GM12878 (cell line): ENCODE measurements at regions of chr17 and their contacts with region 1.

Region 1: GRCh38 chr17:46212634-46213435 is 19.6 kb upstream of the KANSL1 start:
- DNase-seq: no peak
- ATAC-seq: peak; percentile 89
- H3K4me3 ChIP-seq: no peak overlapping the region
- H3K27ac ChIP-seq: no peak overlapping the region
- H3K4me1 ChIP-seq: no peaks in the 10 kb centered on the region
- H3K27me3 ChIP-seq: no peaks in the 10 kb centered on the region
- CTCF ChIP-seq: peak; percentile 77 to 93 (median 89)
- EP300 ChIP-seq: no peak
- POLR2A ChIP-seq: no peak
- RAD21 ChIP-seq: peak; percentile 91

Region 2: GRCh38 chr17:46009681-46010596 is 202.9 kb before region 1 on chr17:
- CTCF ChIA-PET with region 1: interaction called, 65 read pairs
- POLR2A ChIA-PET with region 1: no interaction called
- RAD21 ChIA-PET with region 1: interaction called, 4 read pairs
- SMC1A ChIA-PET with region 1: interaction called, 26 read pairs
- in situ Hi-C with region 1: no loop called
- intact Hi-C with region 1: no loop called
- DNase-seq: no peak
- ATAC-seq: no peak
- H3K4me3 ChIP-seq: no peak overlapping the region
- H3K27ac ChIP-seq: no peak overlapping the region
- H3K4me1 ChIP-seq: no peaks in the 10 kb centered on the region
- H3K27me3 ChIP-seq: no peaks in the 10 kb centered on the region
- CTCF ChIP-seq: no peak
- EP300 ChIP-seq: no peak
- POLR2A ChIP-seq: no peak
- RAD21 ChIP-seq: no peak

Region 3: DNA sequence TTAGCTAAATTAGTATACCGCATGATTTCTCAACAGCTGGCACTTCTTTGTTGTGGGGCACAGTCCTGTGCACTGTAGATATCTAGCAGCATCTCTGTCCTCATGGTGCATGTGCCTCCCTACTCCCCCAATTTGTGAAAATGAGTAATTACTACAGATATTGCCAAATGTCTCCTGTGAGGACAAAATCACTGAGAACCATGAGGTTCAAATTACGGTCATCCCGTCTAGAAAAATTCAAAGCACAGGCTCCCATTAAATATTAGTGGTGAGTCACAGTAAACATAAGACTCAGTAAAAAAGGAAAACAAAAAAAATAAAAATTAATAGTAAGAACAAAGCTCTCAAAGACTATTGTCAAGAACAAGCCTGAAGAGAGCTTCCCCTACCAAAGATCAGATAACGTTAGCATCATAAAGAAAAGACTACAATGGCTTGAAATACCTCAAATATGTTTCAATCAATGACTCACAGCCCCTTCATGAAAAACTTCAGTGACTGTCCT is 156.0 kb before region 1 on chr17:
- CTCF ChIA-PET with region 1: interaction called, 14 read pairs
- POLR2A ChIA-PET with region 1: no interaction called
- RAD21 ChIA-PET with region 1: interaction called, 6 read pairs
- SMC1A ChIA-PET with region 1: interaction called, 6 read pairs
- in situ Hi-C with region 1: no loop called
- intact Hi-C with region 1: no loop called
- DNase-seq: no peak
- ATAC-seq: no peak
- H3K4me3 ChIP-seq: no peak overlapping the region
- H3K27ac ChIP-seq: no peak overlapping the region
- H3K4me1 ChIP-seq: peaks cover 6% of the 10 kb centered on the region
- H3K27me3 ChIP-seq: no peaks in the 10 kb centered on the region
- CTCF ChIP-seq: no peak
- EP300 ChIP-seq: no peak
- POLR2A ChIP-seq: no peak
- RAD21 ChIP-seq: no peak

Region 4: GRCh38 chr17:46121841-46122485 is 90.9 kb before region 1 on chr17:
- CTCF ChIA-PET with region 1: interaction called, 12 read pairs
- POLR2A ChIA-PET with region 1: no interaction called
- RAD21 ChIA-PET with region 1: interaction called, 3 read pairs
- SMC1A ChIA-PET with region 1: interaction called, 5 read pairs
- in situ Hi-C with region 1: no loop called
- intact Hi-C with region 1: no loop called
- DNase-seq: peak; percentile 65
- ATAC-seq: peak; percentile 81
- H3K4me3 ChIP-seq: peak overlapping the region; percentile 33
- H3K27ac ChIP-seq: peak overlapping the region; percentile 62
- H3K4me1 ChIP-seq: peaks cover 59% of the 10 kb centered on the region
- H3K27me3 ChIP-seq: no peaks in the 10 kb centered on the region
- CTCF ChIP-seq: no peak
- EP300 ChIP-seq: peak; percentile 33 to 59; a peak in 3 of 4 replicates
- POLR2A ChIP-seq: no peak
- RAD21 ChIP-seq: no peak

Region 5: GRCh38 chr17:46179375-46179999 is 33.3 kb before region 1 on chr17:
- CTCF ChIA-PET with region 1: interaction called, 39 read pairs
- POLR2A ChIA-PET with region 1: interaction called, 3 read pairs
- RAD21 ChIA-PET with region 1: interaction called, 41 read pairs
- SMC1A ChIA-PET with region 1: interaction called, 6 read pairs
- in situ Hi-C with region 1: no loop called
- intact Hi-C with region 1: no loop called
- DNase-seq: peak; percentile 73
- ATAC-seq: peak; percentile 79
- H3K4me3 ChIP-seq: peak overlapping the region; percentile 17; the same call in 1 of the 2 replicates
- H3K27ac ChIP-seq: peak overlapping the region; percentile 29
- H3K4me1 ChIP-seq: peaks cover 50% of the 10 kb centered on the region
- H3K27me3 ChIP-seq: no peaks in the 10 kb centered on the region
- CTCF ChIP-seq: no peak
- EP300 ChIP-seq: peak in 1 of 2 experiments; percentile 45; a peak in 1 of 4 replicates
- POLR2A ChIP-seq: no peak
- RAD21 ChIP-seq: no peak

Region 6: GRCh38 chr17:46199379-46199778 is 13.5 kb before region 1 on chr17:
- CTCF ChIA-PET with region 1: interaction called, 152 read pairs
- POLR2A ChIA-PET with region 1: interaction called, 6 read pairs
- RAD21 ChIA-PET with region 1: interaction called, 23 read pairs
- SMC1A ChIA-PET with region 1: interaction called, 68 read pairs
- in situ Hi-C with region 1: no loop called
- intact Hi-C with region 1: no loop called
- DNase-seq: no peak
- ATAC-seq: no peak
- H3K4me3 ChIP-seq: no peak overlapping the region
- H3K27ac ChIP-seq: no peak overlapping the region
- H3K4me1 ChIP-seq: peaks cover 17% of the 10 kb centered on the region
- H3K27me3 ChIP-seq: no peaks in the 10 kb centered on the region
- CTCF ChIP-seq: no peak
- EP300 ChIP-seq: no peak
- POLR2A ChIP-seq: no peak
- RAD21 ChIP-seq: no peak